Activated naive CD4-positive, alpha-beta T cell treated with anti-CD3 and anti-CD28 coated beads for 36 hours (primary cell): ENCODE measurements at regions of chr1 and their contacts with region 1.

Region 1: GRCh38 chr1:155244368-155245162 is 10.7 kb downstream of the ENTREP3 start:
- DNase-seq: peak; percentile 99
- H3K4me3 Mint-ChIP-seq: peak overlapping the region; percentile 88
- H3K27ac Mint-ChIP-seq: peak overlapping the region; percentile 98
- H3K4me1 Mint-ChIP-seq: peaks cover 40% of the 10 kb centered on the region
- H3K27me3 Mint-ChIP-seq: peaks cover 2% of the 10 kb centered on the region

Region 2: GRCh38 chr1:154955718-154956543 is 288.6 kb before region 1 on chr1 and contains the start of gene PBXIP1:
- CTCF ChIA-PET with region 1: no interaction called
- intact Hi-C with region 1: loop called (anchors 1 kb)
- DNase-seq: peak; percentile 88
- H3K4me3 Mint-ChIP-seq: peak within 1 kb of the TSS; percentile 91
- H3K27ac Mint-ChIP-seq: peak within 1 kb of the TSS; percentile 96
- H3K4me1 Mint-ChIP-seq: peaks cover 74% of the 10 kb centered on the region
- H3K27me3 Mint-ChIP-seq: no peaks in the 10 kb centered on the region
- total RNA-seq, gene PBXIP1: 55.3 to 55.5 TPM

Region 3: GRCh38 chr1:155091071-155091709 is 153.4 kb before region 1 on chr1:
- CTCF ChIA-PET with region 1: no interaction called
- intact Hi-C with region 1: no loop called
- DNase-seq: peak; percentile 84
- H3K4me3 Mint-ChIP-seq: no peak overlapping the region
- H3K27ac Mint-ChIP-seq: no peak overlapping the region
- H3K4me1 Mint-ChIP-seq: peaks cover 6% of the 10 kb centered on the region
- H3K27me3 Mint-ChIP-seq: no peaks in the 10 kb centered on the region

Region 4: GRCh38 chr1:155139895-155140631 is 104.5 kb before region 1 on chr1 and contains the start of gene DPM3:
- CTCF ChIA-PET with region 1: no interaction called
- intact Hi-C with region 1: no loop called
- DNase-seq: peak; percentile 95
- H3K4me3 Mint-ChIP-seq: peak within 1 kb of the TSS; percentile 93
- H3K27ac Mint-ChIP-seq: peak within 1 kb of the TSS; percentile 90
- H3K4me1 Mint-ChIP-seq: peaks cover 29% of the 10 kb centered on the region
- H3K27me3 Mint-ChIP-seq: no peaks in the 10 kb centered on the region
- total RNA-seq, gene DPM3: 31.4 to 35.5 TPM

Region 5: DNA sequence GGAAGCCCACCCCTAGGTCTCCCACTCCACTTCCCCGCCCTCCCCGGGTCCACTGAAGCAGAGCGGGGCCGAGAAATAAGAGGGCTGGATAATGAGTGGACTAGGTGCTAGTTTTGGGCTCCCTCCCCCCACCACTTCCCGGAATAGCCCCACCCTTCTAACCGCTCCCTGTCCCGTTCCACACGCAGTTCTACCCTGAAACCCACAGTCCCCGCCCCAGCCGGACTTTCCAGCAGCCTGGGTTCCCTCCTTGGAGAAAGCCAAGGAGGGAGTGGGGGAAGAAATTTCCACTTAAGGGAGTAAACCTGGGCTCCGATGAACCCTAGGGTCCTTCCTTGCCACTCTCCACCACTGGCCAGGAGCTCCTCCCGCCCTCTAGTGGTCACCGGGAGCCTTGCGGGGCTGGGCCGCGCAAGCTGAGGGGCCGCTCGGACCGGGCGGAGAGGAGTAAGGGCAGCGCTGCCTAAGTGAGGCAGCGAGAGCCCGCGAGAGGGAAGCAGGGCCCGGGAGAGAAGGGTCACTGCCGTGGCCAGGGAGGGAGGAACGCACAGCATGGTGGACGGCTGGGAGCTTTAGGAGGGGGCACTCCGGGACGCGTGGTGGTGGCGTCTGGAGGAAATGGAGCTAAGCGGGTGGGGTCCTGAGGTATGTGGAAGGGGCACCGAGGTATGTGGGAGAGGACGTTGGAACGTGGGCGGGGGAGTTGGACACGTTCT is 51.1 kb before region 1 on chr1:
- CTCF ChIA-PET with region 1: no interaction called
- intact Hi-C with region 1: loop called (anchors 1 kb)
- DNase-seq: peak; percentile 86
- H3K4me3 Mint-ChIP-seq: peak overlapping the region; percentile 93
- H3K27ac Mint-ChIP-seq: peak overlapping the region; percentile 96
- H3K4me1 Mint-ChIP-seq: peaks cover 27% of the 10 kb centered on the region
- H3K27me3 Mint-ChIP-seq: no peaks in the 10 kb centered on the region

Region 6: GRCh38 chr1:155208541-155209311 is 35.8 kb before region 1 on chr1 and contains the start of gene MTX1:
- CTCF ChIA-PET with region 1: interaction called, 17 read pairs
- intact Hi-C with region 1: loop called (anchors 1 kb)
- DNase-seq: peak; percentile 89
- H3K4me3 Mint-ChIP-seq: peak within 1 kb of the TSS; percentile 88
- H3K27ac Mint-ChIP-seq: peak within 1 kb of the TSS; percentile 71
- H3K4me1 Mint-ChIP-seq: peaks cover 29% of the 10 kb centered on the region
- H3K27me3 Mint-ChIP-seq: no peaks in the 10 kb centered on the region
- total RNA-seq, gene MTX1: 46.8 to 47.4 TPM

Region 7: GRCh38 chr1:155227261-155228095 is 17.1 kb before region 1 on chr1:
- CTCF ChIA-PET with region 1: interaction called, 5 read pairs
- intact Hi-C with region 1: loop called (anchors 1 kb)
- DNase-seq: peak; percentile 100
- H3K4me3 Mint-ChIP-seq: peak overlapping the region; percentile 89
- H3K27ac Mint-ChIP-seq: peak overlapping the region; percentile 96
- H3K4me1 Mint-ChIP-seq: peaks cover 31% of the 10 kb centered on the region
- H3K27me3 Mint-ChIP-seq: no peaks in the 10 kb centered on the region

Region 8: DNA sequence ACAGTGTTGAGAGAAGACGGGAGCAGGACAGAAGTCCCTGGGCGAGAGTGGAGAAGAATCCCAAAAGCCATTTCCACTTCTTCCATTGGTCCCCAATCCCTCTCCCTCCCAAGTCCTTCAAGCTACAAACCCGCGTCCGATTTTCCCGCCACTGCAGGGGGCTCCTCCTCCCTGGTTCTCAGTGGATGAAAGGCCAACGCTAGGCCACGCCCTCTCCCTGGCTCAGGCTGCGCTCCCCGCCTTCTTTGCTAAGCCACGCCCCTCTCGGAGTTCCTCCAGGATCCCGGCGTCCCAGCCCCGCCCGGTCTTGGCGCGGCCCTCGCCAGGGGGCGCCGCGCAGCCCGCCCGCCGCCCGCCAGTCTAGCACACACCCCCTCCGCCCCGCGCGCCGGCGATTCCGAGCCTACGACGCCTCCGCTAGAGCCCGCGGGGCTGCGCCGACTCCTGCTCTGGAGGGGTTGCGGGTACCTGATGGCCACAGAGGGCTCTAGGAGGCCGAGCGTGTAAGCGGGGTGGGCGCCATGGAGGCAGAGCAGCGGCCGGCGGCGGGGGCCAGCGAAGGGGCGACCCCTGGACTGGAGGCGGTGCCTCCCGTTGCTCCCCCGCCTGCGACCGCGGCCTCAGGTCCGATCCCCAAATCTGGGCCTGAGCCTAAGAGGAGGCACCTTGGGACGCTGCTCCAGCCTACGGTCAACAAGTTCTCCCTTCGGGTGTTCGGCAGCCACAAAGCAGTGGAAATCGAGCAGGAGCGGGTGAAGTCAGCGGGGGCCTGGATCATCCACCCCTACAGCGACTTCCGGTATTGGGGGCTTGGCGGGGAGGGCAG is 32.7 kb after region 1 on chr1 and contains the start of gene HCN3:
- CTCF ChIA-PET with region 1: interaction called, 26 read pairs
- intact Hi-C with region 1: loop called (anchors 1 kb)
- DNase-seq: peak; percentile 96
- H3K4me3 Mint-ChIP-seq: peak within 1 kb of the TSS; percentile 62
- H3K27ac Mint-ChIP-seq: no peak within 1 kb of the TSS
- H3K4me1 Mint-ChIP-seq: peaks cover 30% of the 10 kb centered on the region
- H3K27me3 Mint-ChIP-seq: no peaks in the 10 kb centered on the region
- total RNA-seq, gene HCN3: 0.79 to 1.6 TPM

Region 9: GRCh38 chr1:155609515-155610256 is 365.1 kb after region 1 on chr1 and contains the start of gene MSTO1:
- CTCF ChIA-PET with region 1: no interaction called
- intact Hi-C with region 1: no loop called
- DNase-seq: peak; percentile 100
- H3K4me3 Mint-ChIP-seq: peak within 1 kb of the TSS; percentile 93
- H3K27ac Mint-ChIP-seq: peak within 1 kb of the TSS; percentile 87
- H3K4me1 Mint-ChIP-seq: peaks cover 13% of the 10 kb centered on the region
- H3K27me3 Mint-ChIP-seq: no peaks in the 10 kb centered on the region
- total RNA-seq, gene MSTO1: 58.6 to 63.1 TPM

Region 10: GRCh38 chr1:155688324-155689080 is 443.9 kb after region 1 on chr1 and contains the start of gene YY1AP1:
- CTCF ChIA-PET with region 1: no interaction called
- intact Hi-C with region 1: loop called (anchors 2 kb)
- DNase-seq: peak; percentile 93
- H3K4me3 Mint-ChIP-seq: peak within 1 kb of the TSS; percentile 97
- H3K27ac Mint-ChIP-seq: peak within 1 kb of the TSS; percentile 95
- H3K4me1 Mint-ChIP-seq: peaks cover 70% of the 10 kb centered on the region
- H3K27me3 Mint-ChIP-seq: no peaks in the 10 kb centered on the region
- total RNA-seq, gene YY1AP1: 54.8 to 59.5 TPM

Region 11: DNA sequence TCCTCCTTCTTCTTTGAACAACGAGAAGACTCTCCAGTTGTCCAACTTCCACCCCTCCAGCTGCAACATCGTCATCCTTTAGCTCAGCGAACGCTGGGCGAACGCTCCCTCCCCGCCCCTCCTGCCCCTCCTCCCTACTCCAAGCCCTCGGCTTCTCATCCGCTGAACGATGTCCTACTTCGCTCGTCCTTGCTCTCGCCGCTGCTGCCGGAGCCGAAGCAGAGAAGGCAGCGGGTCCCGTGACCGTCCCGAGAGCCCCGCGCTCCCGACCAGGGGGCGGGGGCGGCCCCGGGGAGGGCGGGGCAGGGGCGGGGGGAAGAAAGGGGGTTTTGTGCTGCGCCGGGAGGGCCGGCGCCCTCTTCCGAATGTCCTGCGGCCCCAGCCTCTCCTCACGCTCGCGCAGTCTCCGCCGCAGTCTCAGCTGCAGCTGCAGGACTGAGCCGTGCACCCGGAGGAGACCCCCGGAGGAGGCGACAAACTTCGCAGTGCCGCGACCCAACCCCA is 1397.2 kb after region 1 on chr1 and contains the start of gene BCAN:
- CTCF ChIA-PET with region 1: no interaction called
- intact Hi-C with region 1: no loop called
- DNase-seq: peak; percentile 32
- H3K4me3 Mint-ChIP-seq: peak within 1 kb of the TSS; percentile 10
- H3K27ac Mint-ChIP-seq: no peak within 1 kb of the TSS
- H3K4me1 Mint-ChIP-seq: peaks cover 16% of the 10 kb centered on the region
- H3K27me3 Mint-ChIP-seq: peaks cover 78% of the 10 kb centered on the region
- total RNA-seq, gene BCAN: not detected